Activated CD4-positive, alpha-beta memory T cell treated with anti-CD3 and anti-CD28 coated beads for 36 hours (primary cell): ENCODE measurements at regions of chr2 and their contacts with region 1.

Region 1: GRCh38 chr2:74250189-74250631 is 51.8 kb downstream of the MTHFD2 start:
- DNase-seq: peak; percentile 67
- H3K4me3 Mint-ChIP-seq: no peak overlapping the region
- H3K27ac Mint-ChIP-seq: no peak overlapping the region
- H3K4me1 Mint-ChIP-seq: no peaks in the 10 kb centered on the region
- H3K27me3 Mint-ChIP-seq: no peaks in the 10 kb centered on the region

Region 2: GRCh38 chr2:74238879-74239278 is 11.3 kb before region 1 on chr2:
- CTCF ChIA-PET with region 1: interaction called, 19 read pairs
- POLR2A ChIA-PET with region 1: no interaction called
- intact Hi-C with region 1: no loop called
- DNase-seq: no peak
- H3K4me3 Mint-ChIP-seq: no peak overlapping the region
- H3K27ac Mint-ChIP-seq: no peak overlapping the region
- H3K4me1 Mint-ChIP-seq: peaks cover 2% of the 10 kb centered on the region
- H3K27me3 Mint-ChIP-seq: no peaks in the 10 kb centered on the region

Region 3: GRCh38 chr2:74267068-74267467 is 16.9 kb after region 1 on chr2:
- CTCF ChIA-PET with region 1: interaction called, 18 read pairs
- POLR2A ChIA-PET with region 1: no interaction called
- intact Hi-C with region 1: no loop called
- DNase-seq: peak; percentile 78
- H3K4me3 Mint-ChIP-seq: peak overlapping the region; percentile 17
- H3K27ac Mint-ChIP-seq: peak overlapping the region; percentile 52
- H3K4me1 Mint-ChIP-seq: peaks cover 9% of the 10 kb centered on the region
- H3K27me3 Mint-ChIP-seq: no peaks in the 10 kb centered on the region

Region 4: DNA sequence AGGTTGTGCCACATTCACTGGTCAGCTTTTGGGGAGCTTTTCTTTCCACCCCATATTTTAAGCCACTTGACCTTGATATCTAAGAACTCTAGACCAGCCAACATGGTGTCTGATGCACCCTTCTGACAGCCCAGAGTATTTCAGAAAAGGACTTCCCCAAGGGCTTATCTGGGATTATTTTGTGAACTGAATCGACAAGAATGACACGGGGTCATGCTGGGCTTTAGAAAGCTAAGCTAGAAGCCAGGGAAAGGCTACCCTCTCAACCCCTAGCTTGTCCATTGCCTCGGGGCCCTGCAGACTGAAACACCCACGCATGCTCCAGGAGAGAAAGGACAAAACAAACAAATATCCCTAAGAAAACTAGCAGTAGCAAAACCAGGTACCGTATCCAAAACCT is 77.0 kb after region 1 on chr2:
- CTCF ChIA-PET with region 1: interaction called, 193 read pairs
- POLR2A ChIA-PET with region 1: no interaction called
- intact Hi-C with region 1: no loop called
- DNase-seq: no peak
- H3K4me3 Mint-ChIP-seq: no peak overlapping the region
- H3K27ac Mint-ChIP-seq: no peak overlapping the region
- H3K4me1 Mint-ChIP-seq: no peaks in the 10 kb centered on the region
- H3K27me3 Mint-ChIP-seq: no peaks in the 10 kb centered on the region

Region 5: DNA sequence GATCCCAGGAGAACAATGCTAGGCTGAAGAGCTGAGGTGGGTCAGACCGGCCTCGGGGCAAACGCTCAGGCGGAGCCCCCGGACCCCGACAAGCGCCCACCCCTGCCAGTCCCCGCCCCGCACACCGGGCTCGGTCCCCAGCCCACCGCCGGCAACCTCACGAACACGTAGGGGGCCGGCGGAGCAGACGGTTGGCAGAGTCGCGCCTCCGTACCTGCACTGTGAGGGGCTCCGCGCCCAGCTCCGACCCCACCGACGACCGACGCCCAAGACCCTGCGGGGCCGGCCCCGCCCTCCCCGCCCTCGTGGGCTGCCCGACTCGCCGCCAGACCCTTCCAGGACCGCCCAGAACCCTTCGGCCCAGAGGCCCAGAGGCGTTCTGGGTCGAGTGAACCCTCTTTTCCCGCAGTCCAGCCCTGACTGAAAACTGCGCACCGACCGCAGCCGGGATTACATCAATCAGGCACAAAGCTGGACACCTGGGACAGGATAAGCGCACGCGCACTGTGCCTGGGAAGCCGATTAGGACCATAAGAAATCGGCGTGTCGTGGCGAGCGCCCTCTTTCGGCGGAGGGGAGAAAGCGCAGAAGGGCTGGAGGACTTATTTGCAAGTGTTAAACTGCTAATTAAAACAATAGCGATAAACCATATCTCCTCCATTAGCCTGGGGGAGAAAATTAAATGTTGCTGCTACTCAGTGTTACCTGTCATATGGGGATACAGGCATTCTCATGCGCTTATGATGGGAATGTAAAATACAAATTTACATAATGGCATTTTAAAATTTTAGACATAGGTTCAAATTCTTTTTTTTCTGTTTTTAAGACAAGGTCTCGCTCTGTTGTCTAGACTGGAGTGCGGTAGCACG is 141.6 kb after region 1 on chr2:
- CTCF ChIA-PET with region 1: interaction called, 35 read pairs
- POLR2A ChIA-PET with region 1: no interaction called
- intact Hi-C with region 1: loop called (anchors 5 kb)
- DNase-seq: peak; percentile 95
- H3K4me3 Mint-ChIP-seq: peak overlapping the region; percentile 92
- H3K27ac Mint-ChIP-seq: peak overlapping the region; percentile 96
- H3K4me1 Mint-ChIP-seq: peaks cover 4% of the 10 kb centered on the region
- H3K27me3 Mint-ChIP-seq: no peaks in the 10 kb centered on the region

Region 6: DNA sequence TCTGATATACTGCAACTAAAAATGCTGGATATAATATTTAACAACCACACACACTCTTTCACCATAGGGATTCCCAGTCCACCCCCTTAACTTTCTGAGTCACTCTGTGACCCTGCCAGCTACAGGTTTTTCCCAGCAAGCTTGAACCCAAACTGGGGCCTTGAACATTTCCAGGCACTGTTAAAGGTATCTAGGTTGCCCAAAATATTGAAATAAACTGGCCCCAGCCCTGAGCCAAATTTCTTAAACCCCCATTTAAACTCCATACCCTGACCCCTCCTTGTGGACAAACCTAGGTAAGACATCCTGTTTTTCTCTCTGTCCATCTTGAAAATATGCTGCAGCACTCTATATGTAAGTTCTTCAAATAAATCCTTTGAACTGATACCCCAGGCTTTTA is 149.6 kb after region 1 on chr2:
- CTCF ChIA-PET with region 1: interaction called, 15 read pairs
- POLR2A ChIA-PET with region 1: no interaction called
- intact Hi-C with region 1: loop called (anchors 5 kb)
- DNase-seq: no peak
- H3K4me3 Mint-ChIP-seq: no peak overlapping the region
- H3K27ac Mint-ChIP-seq: no peak overlapping the region
- H3K4me1 Mint-ChIP-seq: no peaks in the 10 kb centered on the region
- H3K27me3 Mint-ChIP-seq: peaks cover 2% of the 10 kb centered on the region